ENCODE measurements at regions of chr14 and their contacts with region 1.

Region 1: DNA sequence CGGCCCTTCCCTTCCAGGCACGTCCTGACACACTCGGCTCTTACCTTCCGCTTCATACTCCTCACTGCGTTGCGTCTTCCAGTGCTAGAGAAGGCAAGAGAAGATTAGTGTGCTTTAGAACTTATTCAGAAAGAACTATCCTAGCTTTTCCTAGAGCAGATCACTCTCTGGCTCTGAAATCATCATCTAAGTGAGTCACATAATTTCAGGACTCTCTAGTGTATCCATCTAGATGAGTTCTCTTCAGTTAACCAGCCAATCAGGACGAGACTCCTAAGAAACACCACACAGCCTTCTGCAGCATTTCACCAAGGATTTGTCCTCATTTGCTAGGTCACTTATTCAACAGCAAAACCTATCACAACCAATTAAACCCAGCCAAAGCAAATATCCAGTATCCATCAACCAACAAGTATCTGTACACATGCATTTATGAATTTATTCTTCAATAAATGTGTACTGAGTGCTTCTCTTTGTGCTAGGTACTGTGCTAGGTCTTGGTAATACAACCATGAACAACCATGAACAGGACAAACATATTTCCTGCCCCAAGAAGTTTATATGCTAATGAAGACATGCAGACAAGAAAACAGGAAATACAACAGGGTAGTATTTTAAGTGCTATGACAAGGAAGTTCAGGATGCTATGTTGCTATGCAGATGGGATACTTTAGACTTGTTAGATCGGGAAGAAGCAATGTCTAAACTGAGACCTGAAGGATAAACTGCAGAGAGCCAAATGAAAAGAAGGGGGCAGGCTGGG is 52.1 kb downstream of the NIN start:
- DNase-seq: no peak
- ATAC-seq: peak; percentile 25
- H3K4me3 Mint-ChIP-seq: no peak overlapping the region
- H3K27ac Mint-ChIP-seq: peak overlapping the region; percentile 62
- H3K4me1 Mint-ChIP-seq: peaks cover 30% of the 10 kb centered on the region
- H3K27me3 Mint-ChIP-seq: no peaks in the 10 kb centered on the region
- CTCF ChIP-seq: no peak

Region 2: DNA sequence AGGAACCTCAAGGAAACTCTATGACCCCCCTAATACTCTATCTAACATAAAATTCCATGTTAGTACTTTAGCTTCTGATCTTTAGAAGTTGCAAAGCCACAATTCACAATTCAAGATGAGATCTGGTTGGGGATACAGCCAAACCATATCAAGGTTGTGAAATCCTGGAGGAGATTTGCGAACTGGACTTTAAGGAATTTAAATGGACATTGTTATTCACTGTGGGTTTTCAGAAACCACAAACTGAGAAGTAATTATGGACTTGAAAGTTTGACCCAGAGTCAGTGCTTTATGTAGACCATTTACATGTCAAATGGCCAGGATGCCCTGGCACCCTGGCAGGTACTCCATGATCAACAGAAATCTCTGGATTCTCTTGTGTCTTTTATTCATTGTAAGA is 368.0 kb before region 1 on chr14:
- CTCF ChIA-PET with region 1: no interaction called
- POLR2A ChIA-PET with region 1: interaction called, 10 read pairs
- intact Hi-C with region 1: no loop called
- DNase-seq: no peak
- ATAC-seq: no peak
- H3K4me3 Mint-ChIP-seq: no peak overlapping the region
- H3K27ac Mint-ChIP-seq: no peak overlapping the region
- H3K4me1 Mint-ChIP-seq: peaks cover 6% of the 10 kb centered on the region
- H3K27me3 Mint-ChIP-seq: no peaks in the 10 kb centered on the region
- CTCF ChIP-seq: no peak

Region 3: DNA sequence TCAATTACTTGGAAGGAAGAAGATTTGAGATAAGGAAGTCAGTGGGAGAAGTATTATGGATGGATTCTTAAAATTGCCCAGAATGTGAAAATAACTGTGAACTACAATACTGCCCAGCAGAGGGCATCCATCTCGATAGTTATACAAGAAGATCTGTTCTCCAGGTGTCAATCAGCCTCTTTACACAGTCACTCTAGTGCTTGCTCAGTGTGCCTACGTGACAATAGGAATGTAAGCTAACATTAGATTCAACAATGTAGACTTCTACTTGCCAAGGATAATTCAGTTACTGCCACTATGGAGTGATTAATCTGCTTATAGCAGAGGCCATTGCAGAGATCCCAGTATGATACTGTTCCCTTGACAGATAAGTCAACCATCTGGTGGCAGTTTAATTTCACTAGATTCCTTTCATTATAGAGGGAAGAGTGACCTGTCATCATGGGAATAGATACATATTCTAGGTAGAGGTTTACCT is 235.9 kb before region 1 on chr14:
- CTCF ChIA-PET with region 1: interaction called, 8 read pairs
- POLR2A ChIA-PET with region 1: no interaction called
- intact Hi-C with region 1: loop called (anchors 1 kb)
- DNase-seq: no peak
- ATAC-seq: peak; percentile 71
- H3K4me3 Mint-ChIP-seq: no peak overlapping the region
- H3K27ac Mint-ChIP-seq: no peak overlapping the region
- H3K4me1 Mint-ChIP-seq: peaks cover 8% of the 10 kb centered on the region
- H3K27me3 Mint-ChIP-seq: no peaks in the 10 kb centered on the region
- CTCF ChIP-seq: no peak

Region 4: DNA sequence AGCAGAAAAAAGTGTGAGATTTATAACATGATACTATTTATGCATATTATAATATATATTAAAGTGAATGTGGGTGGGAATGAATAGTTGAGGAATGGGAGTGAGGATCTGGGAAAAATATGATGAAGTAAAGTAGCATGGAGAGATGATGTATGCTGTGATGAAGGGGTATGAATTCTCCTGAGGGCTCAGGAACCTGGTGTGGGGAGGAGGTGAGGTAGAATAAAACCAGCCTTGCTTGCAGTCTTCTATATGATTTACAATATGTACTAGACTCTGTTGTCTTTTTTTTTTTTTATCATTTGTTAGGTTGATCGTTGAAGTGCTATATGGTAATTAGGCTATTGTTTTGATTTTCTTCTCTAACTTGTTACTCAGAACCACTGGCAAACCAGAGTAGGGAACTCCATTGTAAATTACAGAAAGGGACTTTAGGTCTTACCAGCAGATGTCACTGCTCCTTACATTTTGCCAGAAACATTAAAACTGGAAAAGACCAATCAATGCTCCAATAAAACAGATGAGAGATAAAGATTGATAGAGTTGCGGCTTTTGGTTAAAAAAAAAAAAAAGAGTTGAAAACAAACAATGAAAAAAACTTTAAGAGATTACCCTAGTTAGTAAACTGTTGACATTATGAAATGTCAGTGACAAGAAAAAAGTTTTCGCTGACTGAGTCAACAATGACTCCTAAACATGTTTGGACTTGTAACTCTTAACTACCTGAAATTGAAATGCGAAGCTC is 179.0 kb before region 1 on chr14:
- CTCF ChIA-PET with region 1: interaction called, 9 read pairs
- POLR2A ChIA-PET with region 1: no interaction called
- intact Hi-C with region 1: loop called (anchors 1 kb)
- DNase-seq: no peak
- ATAC-seq: no peak
- H3K4me3 Mint-ChIP-seq: no peak overlapping the region
- H3K27ac Mint-ChIP-seq: no peak overlapping the region
- H3K4me1 Mint-ChIP-seq: no peaks in the 10 kb centered on the region
- H3K27me3 Mint-ChIP-seq: no peaks in the 10 kb centered on the region
- CTCF ChIP-seq: no peak

Region 5: GRCh38 chr14:50619556-50620141 is 159.3 kb before region 1 on chr14:
- CTCF ChIA-PET with region 1: interaction called, 24 read pairs
- POLR2A ChIA-PET with region 1: no interaction called
- intact Hi-C with region 1: loop called (anchors 2 kb)
- DNase-seq: no peak
- ATAC-seq: peak; percentile 68
- H3K4me3 Mint-ChIP-seq: no peak overlapping the region
- H3K27ac Mint-ChIP-seq: no peak overlapping the region
- H3K4me1 Mint-ChIP-seq: peaks cover 5% of the 10 kb centered on the region
- H3K27me3 Mint-ChIP-seq: no peaks in the 10 kb centered on the region
- CTCF ChIP-seq: peak; percentile 30

Region 6: DNA sequence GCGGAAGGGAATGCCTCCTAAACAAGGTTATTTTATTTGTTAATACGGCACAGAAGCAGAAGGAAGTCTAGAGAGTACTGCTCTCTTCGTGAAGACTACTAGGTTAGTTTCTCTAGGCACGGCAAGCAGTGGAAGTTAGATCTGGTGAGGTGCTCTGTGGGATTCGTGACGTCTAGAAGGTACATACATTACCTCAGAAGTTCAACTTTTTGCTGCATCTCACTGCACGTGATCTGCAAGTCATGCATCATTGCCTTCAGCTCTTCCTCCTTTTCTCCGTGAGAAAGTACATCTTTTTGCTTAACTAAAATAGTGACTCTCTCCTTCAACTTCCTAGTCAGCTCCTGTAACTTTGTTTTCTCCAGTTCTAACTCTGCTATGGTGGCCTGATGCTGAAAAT is 22.6 kb before region 1 on chr14:
- CTCF ChIA-PET with region 1: interaction called, 17 read pairs
- POLR2A ChIA-PET with region 1: no interaction called
- intact Hi-C with region 1: no loop called
- DNase-seq: peak; percentile 28
- ATAC-seq: peak; percentile 91
- H3K4me3 Mint-ChIP-seq: no peak overlapping the region
- H3K27ac Mint-ChIP-seq: no peak overlapping the region
- H3K4me1 Mint-ChIP-seq: peaks cover 6% of the 10 kb centered on the region
- H3K27me3 Mint-ChIP-seq: no peaks in the 10 kb centered on the region
- CTCF ChIP-seq: no peak

Region 7: GRCh38 chr14:50823051-50823761 is 44.3 kb after region 1 on chr14:
- CTCF ChIA-PET with region 1: interaction called, 16 read pairs
- POLR2A ChIA-PET with region 1: interaction called, 143 read pairs
- intact Hi-C with region 1: no loop called
- DNase-seq: no peak
- ATAC-seq: peak; percentile 32
- H3K4me3 Mint-ChIP-seq: peak overlapping the region; percentile 81
- H3K27ac Mint-ChIP-seq: peak overlapping the region; percentile 97
- H3K4me1 Mint-ChIP-seq: peaks cover 95% of the 10 kb centered on the region
- H3K27me3 Mint-ChIP-seq: no peaks in the 10 kb centered on the region
- CTCF ChIP-seq: no peak

Measured in activated B cell treated with CpG ODN at 0.5 μM for 24 hours (primary cell).